AG04450 (cell line): ENCODE measurements at regions of chr15 and their contacts with region 1.

Region 1: DNA sequence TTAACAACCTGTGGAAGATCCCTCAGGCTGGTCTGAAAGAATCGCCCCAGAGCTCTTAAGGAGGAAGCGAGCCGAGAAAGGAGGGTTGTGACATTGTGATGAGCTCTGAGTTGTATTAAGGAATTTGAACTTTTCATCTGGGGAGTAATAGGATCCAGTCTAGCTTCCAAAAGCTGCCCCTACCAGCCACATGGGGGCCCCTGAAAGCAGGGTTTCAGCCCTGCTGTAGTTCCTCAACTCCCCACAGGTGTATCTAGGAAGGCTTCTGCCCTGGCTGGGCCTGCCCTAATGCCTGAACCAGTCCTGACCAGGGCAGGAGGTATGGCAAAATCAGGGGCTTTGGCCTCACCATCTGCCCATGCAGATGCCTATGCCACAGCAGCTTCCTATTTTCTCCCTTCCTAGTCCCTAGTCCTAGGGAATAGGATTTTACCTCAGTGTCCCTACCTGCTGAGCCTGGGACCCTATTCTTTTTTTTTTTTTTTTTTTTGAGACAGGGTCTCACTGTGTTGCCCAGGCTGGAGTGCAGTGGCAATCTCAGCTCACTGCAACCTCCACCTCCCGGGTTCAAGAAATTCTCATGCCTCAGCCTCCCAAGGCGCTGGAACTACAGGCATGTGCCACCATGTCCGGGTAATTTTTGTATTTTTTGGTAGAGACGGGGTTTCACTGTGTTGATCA is 5.0 kb upstream of the AP3S2 start:
- DNase-seq: no peak
- H3K4me3 ChIP-seq: no peak overlapping the region
- H3K27ac ChIP-seq: no peak overlapping the region
- H3K27me3 ChIP-seq: no peaks in the 10 kb centered on the region
- CTCF ChIP-seq: peak; percentile 62

Region 2: GRCh38 chr15:89808855-89809786 is 89.6 kb before region 1 on chr15:
- CTCF ChIA-PET with region 1: no interaction called
- POLR2A ChIA-PET with region 1: no interaction called
- DNase-seq: no peak
- H3K4me3 ChIP-seq: no peak overlapping the region
- H3K27ac ChIP-seq: peak overlapping the region; percentile 31
- H3K27me3 ChIP-seq: no peaks in the 10 kb centered on the region
- CTCF ChIP-seq: no peak

Region 3: DNA sequence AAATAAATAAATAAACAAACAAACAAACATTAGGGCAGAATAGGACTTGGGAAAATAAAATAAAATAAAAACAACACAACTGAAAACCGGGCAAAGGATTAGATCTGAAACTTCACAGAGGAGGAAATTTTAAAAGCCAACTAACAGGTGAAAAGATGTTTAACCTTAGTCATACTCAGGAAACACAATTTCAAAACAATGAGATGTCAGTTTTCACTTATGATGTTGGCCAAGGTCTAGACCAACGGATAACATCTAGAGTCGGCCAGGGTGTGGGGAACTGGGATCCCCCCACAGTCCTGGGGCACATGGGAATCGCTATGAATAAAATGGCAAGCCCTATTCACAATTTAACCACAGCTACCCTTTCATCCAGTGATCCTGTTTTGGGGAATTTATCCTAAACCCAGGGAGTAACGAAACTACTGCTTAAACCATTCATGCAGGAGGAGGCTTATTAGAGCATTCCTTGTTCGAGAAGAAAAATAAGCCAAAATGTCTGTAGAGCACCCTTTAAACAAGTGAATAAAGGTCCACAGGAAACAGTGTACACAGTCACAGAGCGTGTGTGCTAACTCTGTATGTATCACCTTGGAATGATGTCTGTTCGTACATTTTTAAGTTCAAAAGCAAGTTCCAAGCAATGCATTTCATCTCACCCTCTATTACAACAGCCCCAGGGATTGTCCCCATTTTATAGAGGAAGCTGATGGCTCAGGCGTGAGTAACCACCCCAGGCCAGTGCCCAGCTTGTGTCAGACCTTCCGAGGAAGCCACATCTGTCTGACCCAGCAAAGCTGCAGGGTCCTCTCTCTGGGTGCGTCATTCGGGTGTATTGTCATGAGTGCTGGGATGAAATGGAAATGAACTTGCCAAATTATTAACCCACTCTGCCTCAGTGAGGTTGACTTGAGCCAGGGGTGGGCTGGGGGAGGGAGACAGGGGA is 77.8 kb before region 1 on chr15:
- CTCF ChIA-PET with region 1: no interaction called
- POLR2A ChIA-PET with region 1: no interaction called
- DNase-seq: no peak
- H3K4me3 ChIP-seq: no peak overlapping the region
- H3K27ac ChIP-seq: no peak overlapping the region
- H3K27me3 ChIP-seq: no peaks in the 10 kb centered on the region
- CTCF ChIP-seq: no peak

Region 4: DNA sequence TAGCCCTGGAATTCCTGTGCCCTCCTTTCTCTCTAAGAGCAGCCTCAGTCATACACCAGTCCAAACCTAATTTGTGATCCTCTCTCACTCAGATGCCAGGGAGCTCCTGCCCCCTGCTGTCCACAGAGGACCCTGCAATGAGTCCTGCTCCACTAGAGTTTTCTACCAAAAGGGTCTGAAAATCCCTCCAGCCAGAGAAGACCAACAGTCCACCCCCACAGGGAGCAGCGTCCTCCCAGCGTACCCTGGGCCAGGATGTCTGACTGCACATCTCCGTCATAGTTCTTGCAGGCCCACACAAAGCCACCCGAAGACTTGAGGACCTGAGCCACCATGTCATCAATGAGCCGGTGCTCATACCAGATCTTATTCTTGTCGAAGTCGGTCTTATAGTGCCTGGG is 188.1 kb after region 1 on chr15:
- CTCF ChIA-PET with region 1: interaction called, 12 read pairs
- POLR2A ChIA-PET with region 1: no interaction called
- DNase-seq: no peak
- H3K4me3 ChIP-seq: no peak overlapping the region
- H3K27ac ChIP-seq: no peak overlapping the region
- H3K27me3 ChIP-seq: no peaks in the 10 kb centered on the region
- CTCF ChIP-seq: peak; percentile 70